AG04449 (cell line): ENCODE measurements at regions of chr9 and their contacts with region 1.

Region 1: GRCh38 chr9:128420060-128420650 is 502 bp upstream of the CERCAM start:
- DNase-seq: no peak
- H3K4me3 ChIP-seq: peak overlapping the region; percentile 82
- CTCF ChIP-seq: peak; percentile 85

Region 2: DNA sequence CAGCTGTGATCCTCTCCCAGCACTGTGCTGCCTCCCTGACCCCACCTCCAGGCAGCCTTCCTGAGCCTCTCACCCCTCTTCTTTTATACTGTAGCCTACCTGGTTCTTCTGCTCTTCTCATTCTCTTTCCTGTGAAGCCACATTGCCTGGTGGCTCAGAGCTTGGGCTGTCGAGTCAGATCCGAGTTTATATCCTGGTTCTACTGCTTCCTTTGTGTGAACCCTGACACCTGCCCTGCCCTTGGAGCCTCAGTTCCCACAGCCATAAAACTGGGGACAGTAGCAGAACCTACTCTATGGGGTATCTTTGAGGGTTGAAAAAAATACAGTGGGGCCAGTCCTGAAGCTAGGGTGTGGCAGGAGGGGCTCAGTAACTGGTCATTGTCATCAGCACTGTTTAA is 71.0 kb before region 1 on chr9:
- CTCF ChIA-PET with region 1: no interaction called
- POLR2A ChIA-PET with region 1: no interaction called
- DNase-seq: no peak
- H3K4me3 ChIP-seq: no peak overlapping the region
- CTCF ChIP-seq: no peak

Region 3: DNA sequence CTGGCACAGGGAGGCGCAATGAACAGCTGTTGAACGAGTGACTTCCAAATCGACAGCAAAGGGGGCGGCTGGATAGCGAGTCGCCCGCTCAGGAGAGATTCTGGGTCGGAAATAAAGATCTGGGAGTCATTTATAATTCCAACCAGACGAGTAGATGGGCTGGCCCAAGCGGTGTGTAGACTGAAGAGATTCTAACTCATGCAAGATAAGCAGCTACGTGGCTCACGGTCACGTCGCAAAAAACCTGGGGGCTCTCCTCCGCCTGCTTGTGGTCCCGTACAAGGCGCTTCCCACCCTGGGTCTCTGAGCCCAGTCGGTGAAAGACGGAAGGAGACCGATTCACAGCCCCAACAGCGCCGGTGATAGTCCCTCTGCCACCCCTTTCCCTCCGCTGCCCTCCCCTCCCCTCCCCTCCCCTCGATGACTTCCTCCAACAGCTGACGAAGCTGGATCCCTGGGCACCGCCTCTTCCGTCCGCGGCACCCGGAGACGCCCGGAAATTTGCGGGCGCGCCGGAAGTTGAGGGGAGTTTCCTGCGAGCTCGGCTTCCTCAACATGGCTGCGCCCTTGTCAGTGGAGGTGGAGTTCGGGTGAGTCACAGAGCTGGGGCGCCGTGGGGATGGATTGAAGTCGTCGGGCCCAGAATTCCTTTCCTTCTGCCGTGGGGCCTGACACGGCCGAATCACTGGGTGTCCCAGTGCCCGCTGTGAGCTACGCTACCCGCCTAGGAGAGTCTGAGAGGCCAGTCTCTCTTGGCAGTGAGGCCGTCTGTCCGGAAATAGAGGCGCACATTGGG is 49.1 kb before region 1 on chr9 and contains the start of gene URM1:
- CTCF ChIA-PET with region 1: interaction called, 70 read pairs
- POLR2A ChIA-PET with region 1: interaction called, 19 read pairs
- DNase-seq: peak; percentile 81
- H3K4me3 ChIP-seq: peak within 1 kb of the TSS; percentile 98
- CTCF ChIP-seq: peak; percentile 19

Region 4: GRCh38 chr9:128383007-128383753 is 37.0 kb before region 1 on chr9:
- CTCF ChIA-PET with region 1: interaction called, 30 read pairs
- POLR2A ChIA-PET with region 1: no interaction called
- DNase-seq: no peak
- H3K4me3 ChIP-seq: no peak overlapping the region
- CTCF ChIP-seq: no peak

Region 5: GRCh38 chr9:128405077-128405779 is 14.9 kb before region 1 on chr9:
- CTCF ChIA-PET with region 1: interaction called, 80 read pairs
- POLR2A ChIA-PET with region 1: interaction called, 8 read pairs
- DNase-seq: no peak
- H3K4me3 ChIP-seq: no peak overlapping the region
- CTCF ChIP-seq: no peak

Region 6: GRCh38 chr9:128438343-128439109 is 18.4 kb after region 1 on chr9:
- CTCF ChIA-PET with region 1: interaction called, 43 read pairs
- POLR2A ChIA-PET with region 1: interaction called, 4 read pairs
- DNase-seq: no peak
- H3K4me3 ChIP-seq: no peak overlapping the region
- CTCF ChIP-seq: peak; percentile 96